HCT116 (cell line): ENCODE measurements at regions of chr14 and their contacts with region 1.

Region 1: GRCh38 chr14:24108336-24108874 is 6.2 kb upstream of the DCAF11 start:
- DNase-seq: no peak
- ATAC-seq: no peak; the same call in 1 of the 2 replicates
- H3K4me3 ChIP-seq: no peak overlapping the region
- H3K27ac ChIP-seq: no peak overlapping the region
- H3K4me1 ChIP-seq: peaks cover 2 to 9% of the 10 kb centered on the region in 2 experiments; a peak in 3 of 4 replicates
- H3K27me3 ChIP-seq: no peaks in the 10 kb centered on the region
- CTCF ChIP-seq: no peak
- POLR2A ChIP-seq: no peak
- RAD21 ChIP-seq: no peak

Region 2: GRCh38 chr14:24013654-24014514 is 94.5 kb before region 1 on chr14:
- CTCF ChIA-PET with region 1: no interaction called
- POLR2A ChIA-PET with region 1: no interaction called
- RAD21 ChIA-PET with region 1: no interaction called
- intact Hi-C with region 1: loop called (anchors 1 kb)
- DNase-seq: peak; percentile 78
- ATAC-seq: peak; percentile 99
- H3K4me3 ChIP-seq: no peak overlapping the region
- H3K27ac ChIP-seq: no peak overlapping the region
- H3K4me1 ChIP-seq: peaks cover 0 to 4% of the 10 kb centered on the region in 2 experiments; a peak in 1 of 4 replicates
- H3K27me3 ChIP-seq: no peaks in the 10 kb centered on the region
- CTCF ChIP-seq: peak; percentile 86 to 90 (median 87)
- POLR2A ChIP-seq: no peak
- RAD21 ChIP-seq: peak; percentile 95

Region 3: DNA sequence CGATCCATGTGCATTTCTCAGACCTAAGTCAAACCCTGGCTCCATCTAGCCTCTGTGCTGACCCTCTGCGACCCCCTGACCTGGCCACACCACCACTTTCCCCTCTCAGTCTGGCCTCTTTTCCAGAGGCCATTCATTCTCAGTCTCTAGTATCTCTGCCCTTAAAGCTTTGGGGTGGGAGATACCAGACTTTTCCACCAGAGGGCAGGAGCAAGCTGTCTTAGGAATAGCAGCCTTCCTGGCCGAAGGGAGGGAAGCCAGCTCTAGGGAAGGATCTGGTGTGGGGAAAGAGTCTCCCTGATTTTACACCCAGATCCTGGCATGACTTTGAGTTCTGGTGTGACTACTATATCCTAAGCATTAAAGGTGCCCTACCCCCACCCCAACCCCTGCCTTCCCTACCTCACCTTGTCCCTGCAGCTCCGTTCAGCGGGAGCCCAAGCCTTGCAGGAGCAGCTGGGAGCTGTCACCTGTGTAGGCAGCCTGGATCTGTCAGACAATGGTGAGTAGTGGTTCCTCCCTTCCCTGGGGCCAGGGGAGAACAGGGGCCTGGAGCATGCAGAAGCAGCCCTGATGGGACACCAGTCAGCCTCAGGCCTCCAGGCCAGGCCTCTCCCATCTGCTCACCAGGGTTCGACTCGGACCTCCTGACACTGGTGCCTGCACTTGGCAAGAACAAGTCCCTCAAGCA is 50.0 kb before region 1 on chr14:
- CTCF ChIA-PET with region 1: interaction called, 116 read pairs
- POLR2A ChIA-PET with region 1: interaction called, 9 read pairs
- RAD21 ChIA-PET with region 1: interaction called, 18 to 26 read pairs
- intact Hi-C with region 1: loop called (anchors 1 kb)
- DNase-seq: no peak
- ATAC-seq: peak; percentile 92
- H3K4me3 ChIP-seq: no peak overlapping the region
- H3K27ac ChIP-seq: no peak overlapping the region
- H3K4me1 ChIP-seq: peaks cover 0 to 3% of the 10 kb centered on the region in 2 experiments; a peak in 1 of 4 replicates
- H3K27me3 ChIP-seq: no peaks in the 10 kb centered on the region
- CTCF ChIP-seq: peak; percentile 72 to 89 (median 87); a peak in 5 of 6 replicates
- POLR2A ChIP-seq: no peak
- RAD21 ChIP-seq: peak; percentile 95

Region 4: DNA sequence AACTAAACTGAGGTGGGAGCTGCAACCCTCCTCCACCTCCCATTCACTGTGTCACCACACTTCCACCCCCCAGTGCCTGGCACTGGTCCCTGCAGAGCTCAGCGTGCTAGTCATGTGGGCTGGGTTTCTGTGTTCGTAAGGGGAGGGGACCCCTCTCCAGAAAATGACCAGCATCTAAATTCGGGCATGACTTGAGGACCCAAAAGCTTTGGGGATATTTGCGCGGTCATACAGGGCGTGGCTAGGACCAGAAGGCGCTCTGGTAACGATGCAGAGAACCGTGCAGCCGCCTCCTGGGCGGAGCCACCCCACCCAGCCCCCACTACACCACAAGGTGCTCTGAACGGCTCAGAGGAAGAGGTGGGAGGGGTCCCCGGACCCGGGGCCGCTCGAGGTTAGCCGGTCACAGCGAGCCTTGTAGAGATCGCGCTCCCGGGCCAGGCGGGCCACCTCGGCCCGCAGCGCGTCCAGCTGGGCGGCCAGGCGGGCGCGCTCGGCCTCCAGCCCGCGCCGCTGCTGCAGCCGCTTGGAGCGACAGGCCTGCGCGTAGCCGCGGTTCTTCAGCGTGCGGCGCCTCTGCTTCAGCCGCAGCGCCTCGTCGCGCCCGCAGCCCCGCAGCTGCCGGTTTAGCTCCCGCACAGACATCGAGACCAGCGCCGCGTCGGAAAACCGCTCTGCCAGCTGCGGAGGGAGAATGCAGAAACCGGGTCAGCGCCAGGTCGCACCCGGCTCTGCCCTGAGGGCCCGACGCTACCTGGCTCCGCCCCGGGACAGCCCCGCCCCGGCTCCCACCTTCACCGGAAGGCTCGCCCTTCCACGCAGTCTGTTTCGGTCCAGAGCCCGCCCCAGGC is 27.3 kb before region 1 on chr14:
- CTCF ChIA-PET with region 1: interaction called, 15 read pairs
- POLR2A ChIA-PET with region 1: interaction called, 3 read pairs
- RAD21 ChIA-PET with region 1: no interaction called
- intact Hi-C with region 1: no loop called
- DNase-seq: no peak
- ATAC-seq: peak; percentile 93
- H3K4me3 ChIP-seq: peak overlapping the region; percentile 57 to 68
- H3K27ac ChIP-seq: peak overlapping the region; percentile 97
- H3K4me1 ChIP-seq: peaks cover 18 to 27% of the 10 kb centered on the region in 2 experiments
- H3K27me3 ChIP-seq: no peaks in the 10 kb centered on the region
- CTCF ChIP-seq: no peak
- POLR2A ChIP-seq: peak; percentile 79
- RAD21 ChIP-seq: no peak

Region 5: GRCh38 chr14:24160850-24161804 is 52.7 kb after region 1 on chr14 and contains the start of gene IRF9:
- CTCF ChIA-PET with region 1: interaction called, 19 read pairs
- POLR2A ChIA-PET with region 1: interaction called, 11 read pairs
- RAD21 ChIA-PET with region 1: no interaction called
- intact Hi-C with region 1: no loop called
- DNase-seq: peak; percentile 89
- ATAC-seq: peak; percentile 95
- H3K4me3 ChIP-seq: peak within 1 kb of the TSS; percentile 58 to 60
- H3K27ac ChIP-seq: peak within 1 kb of the TSS; percentile 84
- H3K4me1 ChIP-seq: peaks cover 15 to 21% of the 10 kb centered on the region in 2 experiments
- H3K27me3 ChIP-seq: no peaks in the 10 kb centered on the region
- CTCF ChIP-seq: peak; percentile 77 to 94 (median 87)
- POLR2A ChIP-seq: peak; percentile 53
- RAD21 ChIP-seq: peak; percentile 85
- total RNA-seq, gene IRF9: 21.7 TPM